Activated CD4-positive, alpha-beta T cell treated with anti-CD3 and anti-CD28 coated beads, Interleukin-2, amount 10 ng/mL, durations not matched to agents 24 days and 14 days (primary cell): ENCODE measurements at regions of chr12 and their contacts with region 1.

Region 1: GRCh38 chr12:48189331-48190125 is 6.1 kb downstream of the CCDC184 start:
- DNase-seq: peak; percentile 92
- H3K4me3 Mint-ChIP-seq: no peak overlapping the region
- H3K27ac Mint-ChIP-seq: no peak overlapping the region
- H3K4me1 Mint-ChIP-seq: peaks cover 15% of the 10 kb centered on the region
- H3K27me3 Mint-ChIP-seq: peaks cover 67% of the 10 kb centered on the region

Region 2: GRCh38 chr12:47963340-47964040 is 226.0 kb before region 1 on chr12 and contains the start of gene TMEM106C:
- intact Hi-C with region 1: loop called (anchors 5 kb)
- DNase-seq: peak; percentile 98
- H3K4me3 Mint-ChIP-seq: peak within 1 kb of the TSS; percentile 100
- H3K27ac Mint-ChIP-seq: peak within 1 kb of the TSS; percentile 90
- H3K4me1 Mint-ChIP-seq: peaks cover 33% of the 10 kb centered on the region
- H3K27me3 Mint-ChIP-seq: peaks cover 29% of the 10 kb centered on the region
- total RNA-seq, gene TMEM106C: 155 and 162 TPM in 2 replicates

Region 3: DNA sequence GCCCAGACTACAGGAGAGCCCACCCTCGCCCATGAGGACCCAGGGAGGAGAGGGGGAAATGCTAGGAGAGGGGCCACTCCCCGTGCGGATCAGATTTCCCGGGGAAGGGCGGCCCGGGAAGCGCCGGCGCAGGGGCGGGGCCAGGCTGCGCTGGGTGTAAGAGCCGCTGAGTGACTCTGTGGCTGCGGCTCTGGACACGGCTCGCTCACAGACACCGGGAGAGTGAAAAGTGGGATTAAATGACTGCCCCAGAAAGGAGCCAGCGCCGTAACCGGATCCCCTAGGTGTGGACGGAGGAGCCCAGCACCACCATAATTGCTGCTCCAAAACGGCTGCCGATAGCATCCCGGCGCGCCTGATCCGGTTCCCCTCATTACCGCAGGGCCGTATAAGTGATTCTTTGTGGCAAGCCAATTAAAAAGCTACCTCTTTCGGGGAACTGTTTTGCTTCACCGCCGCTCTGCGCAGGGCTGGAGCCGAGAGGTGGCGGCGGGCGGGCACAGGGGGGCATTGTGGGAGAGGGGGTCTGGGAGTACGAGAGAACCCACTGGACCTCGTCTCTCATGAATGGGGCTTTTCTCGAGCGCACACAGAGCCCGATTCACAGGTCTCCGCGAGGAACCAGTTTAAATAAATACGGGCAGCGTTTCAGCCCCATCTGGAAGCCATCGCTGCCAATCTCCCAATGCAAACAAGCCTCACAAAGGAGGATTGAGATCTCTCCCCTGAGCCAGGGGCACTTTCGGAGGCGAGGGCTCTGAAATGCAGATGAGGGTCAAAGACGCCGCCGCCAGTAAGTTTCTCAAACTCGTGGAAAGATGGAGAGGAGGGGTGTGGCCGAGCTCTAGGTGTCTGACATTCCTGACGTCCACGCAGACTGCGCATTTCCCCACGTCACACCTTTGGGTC is 187.8 kb before region 1 on chr12:
- intact Hi-C with region 1: loop called (anchors 5 kb)
- DNase-seq: peak; percentile 72
- H3K4me3 Mint-ChIP-seq: peak overlapping the region; percentile 73
- H3K27ac Mint-ChIP-seq: peak overlapping the region; percentile 42
- H3K4me1 Mint-ChIP-seq: peaks cover 33% of the 10 kb centered on the region
- H3K27me3 Mint-ChIP-seq: peaks cover 90% of the 10 kb centered on the region

Region 4: GRCh38 chr12:48142818-48143674 is 46.5 kb before region 1 on chr12:
- intact Hi-C with region 1: no loop called
- DNase-seq: no peak
- H3K4me3 Mint-ChIP-seq: no peak overlapping the region
- H3K27ac Mint-ChIP-seq: no peak overlapping the region
- H3K4me1 Mint-ChIP-seq: peaks cover 2% of the 10 kb centered on the region
- H3K27me3 Mint-ChIP-seq: no peaks in the 10 kb centered on the region

Region 5: GRCh38 chr12:48175613-48176416 is 13.7 kb before region 1 on chr12:
- intact Hi-C with region 1: no loop called
- DNase-seq: no peak
- H3K4me3 Mint-ChIP-seq: peak overlapping the region; percentile 36
- H3K27ac Mint-ChIP-seq: no peak overlapping the region
- H3K4me1 Mint-ChIP-seq: peaks cover 14% of the 10 kb centered on the region
- H3K27me3 Mint-ChIP-seq: peaks cover 39% of the 10 kb centered on the region

Region 6: DNA sequence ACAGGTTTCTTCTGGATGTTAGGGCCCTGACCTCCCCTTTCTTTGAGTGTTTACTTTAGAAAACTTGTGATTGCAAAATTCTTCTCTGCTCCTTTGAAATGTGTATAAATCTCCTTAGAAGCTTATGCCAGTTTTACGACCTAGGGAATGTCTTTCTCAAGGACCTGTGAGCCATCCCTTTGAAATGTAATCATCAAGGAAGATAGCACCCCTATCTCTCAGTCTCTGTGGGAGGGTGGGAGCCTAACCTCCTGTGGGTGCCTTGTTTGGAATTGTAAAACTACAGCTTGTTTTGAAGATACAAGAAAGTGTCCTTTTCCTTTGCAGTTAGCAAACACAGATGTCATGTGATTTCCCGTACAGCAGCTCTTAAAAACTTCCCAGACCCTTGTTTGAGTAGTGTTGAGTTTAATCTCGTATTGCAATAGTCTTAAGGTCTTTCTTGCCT is 10.3 kb after region 1 on chr12:
- intact Hi-C with region 1: no loop called
- DNase-seq: peak; percentile 75
- H3K4me3 Mint-ChIP-seq: peak overlapping the region; percentile 88
- H3K27ac Mint-ChIP-seq: peak overlapping the region; percentile 97
- H3K4me1 Mint-ChIP-seq: peaks cover 25% of the 10 kb centered on the region
- H3K27me3 Mint-ChIP-seq: peaks cover 6% of the 10 kb centered on the region

Region 7: GRCh38 chr12:48237162-48237561 is 47.6 kb after region 1 on chr12:
- intact Hi-C with region 1: no loop called
- DNase-seq: no peak
- H3K4me3 Mint-ChIP-seq: no peak overlapping the region
- H3K27ac Mint-ChIP-seq: no peak overlapping the region
- H3K4me1 Mint-ChIP-seq: no peaks in the 10 kb centered on the region
- H3K27me3 Mint-ChIP-seq: peaks cover 14% of the 10 kb centered on the region